CD4-positive, alpha-beta T cell (primary cell): ENCODE measurements at regions of chr15 and their contacts with region 1.

Region 1: GRCh38 chr15:63668601-63669000 is 71.4 kb downstream of the FBXL22 start:
- DNase-seq: peak in 3 of 14 experiments; percentile 32 to 74 (median 45)
- ATAC-seq: peak; percentile 71
- H3K4me3 ChIP-seq: peak overlapping the region; percentile 36
- H3K4me3 Mint-ChIP-seq: peak overlapping the region; percentile 57
- H3K27ac ChIP-seq: peak overlapping the region; percentile 37 to 68
- H3K27ac Mint-ChIP-seq: peak overlapping the region; percentile 87
- H3K4me1 ChIP-seq: peaks cover 19% of the 10 kb centered on the region
- H3K4me1 Mint-ChIP-seq: peaks cover 54% of the 10 kb centered on the region
- H3K27me3 ChIP-seq: no peaks in the 10 kb centered on the region
- H3K27me3 Mint-ChIP-seq: no peaks in the 10 kb centered on the region
- CTCF ChIP-seq: no peak

Region 2: GRCh38 chr15:63683343-63683951 is 14.8 kb after region 1 on chr15:
- CTCF ChIA-PET with region 1: no interaction called
- POLR2A ChIA-PET with region 1: interaction called, 4 read pairs
- intact Hi-C with region 1: loop called in 1 of 2 experiments (anchors 2 kb)
- DNase-seq: no peak
- ATAC-seq: no peak
- H3K4me3 ChIP-seq: no peak overlapping the region
- H3K4me3 Mint-ChIP-seq: no peak overlapping the region
- H3K27ac ChIP-seq: no peak overlapping the region
- H3K27ac Mint-ChIP-seq: peak overlapping the region; percentile 17
- H3K4me1 ChIP-seq: no peaks in the 10 kb centered on the region
- H3K4me1 Mint-ChIP-seq: no peaks in the 10 kb centered on the region
- H3K27me3 ChIP-seq: no peaks in the 10 kb centered on the region
- H3K27me3 Mint-ChIP-seq: no peaks in the 10 kb centered on the region
- CTCF ChIP-seq: no peak

Region 3: DNA sequence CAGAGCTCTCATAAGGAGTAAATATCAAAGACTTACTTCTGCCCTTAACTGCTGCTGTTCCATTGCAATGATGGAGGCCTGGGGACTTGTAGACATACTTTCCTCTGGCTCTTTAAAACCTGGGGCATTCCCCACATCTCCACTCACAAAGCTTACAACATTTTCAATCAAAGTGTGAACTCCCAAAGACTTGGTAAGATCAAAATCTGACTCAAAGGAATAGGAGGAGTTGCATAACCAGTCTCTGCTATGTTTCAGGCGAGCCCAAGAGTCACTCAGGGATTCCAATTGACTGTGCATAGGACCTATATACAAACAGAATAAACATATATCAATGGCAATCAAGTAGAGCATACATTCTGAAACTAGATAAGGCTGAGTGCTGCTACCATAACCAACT is 30.1 kb after region 1 on chr15:
- CTCF ChIA-PET with region 1: interaction called, 3 read pairs
- POLR2A ChIA-PET with region 1: no interaction called
- intact Hi-C with region 1: loop called in 1 of 2 experiments (anchors 5 kb)
- DNase-seq: no peak
- ATAC-seq: no peak
- H3K4me3 ChIP-seq: no peak overlapping the region
- H3K4me3 Mint-ChIP-seq: no peak overlapping the region
- H3K27ac ChIP-seq: no peak overlapping the region
- H3K27ac Mint-ChIP-seq: no peak overlapping the region
- H3K4me1 ChIP-seq: no peaks in the 10 kb centered on the region
- H3K4me1 Mint-ChIP-seq: peaks cover 9% of the 10 kb centered on the region
- H3K27me3 ChIP-seq: no peaks in the 10 kb centered on the region
- H3K27me3 Mint-ChIP-seq: no peaks in the 10 kb centered on the region
- CTCF ChIP-seq: no peak

Region 4: GRCh38 chr15:63708126-63708772 is 39.6 kb after region 1 on chr15:
- CTCF ChIA-PET with region 1: interaction called, 3 read pairs
- POLR2A ChIA-PET with region 1: interaction called, 14 read pairs
- intact Hi-C with region 1: no loop called
- DNase-seq: peak in 3 of 14 experiments; percentile 62 to 87 (median 67)
- ATAC-seq: peak; percentile 85
- H3K4me3 ChIP-seq: no peak overlapping the region
- H3K4me3 Mint-ChIP-seq: peak overlapping the region; percentile 2
- H3K27ac ChIP-seq: peak overlapping the region; percentile 41 to 80
- H3K27ac Mint-ChIP-seq: no peak overlapping the region
- H3K4me1 ChIP-seq: peaks cover 14% of the 10 kb centered on the region
- H3K4me1 Mint-ChIP-seq: peaks cover 26% of the 10 kb centered on the region
- H3K27me3 ChIP-seq: no peaks in the 10 kb centered on the region
- H3K27me3 Mint-ChIP-seq: no peaks in the 10 kb centered on the region
- CTCF ChIP-seq: no peak